GM10248 (cell line): ENCODE measurements at regions of chr1 and their contacts with region 1.

Region 1: DNA sequence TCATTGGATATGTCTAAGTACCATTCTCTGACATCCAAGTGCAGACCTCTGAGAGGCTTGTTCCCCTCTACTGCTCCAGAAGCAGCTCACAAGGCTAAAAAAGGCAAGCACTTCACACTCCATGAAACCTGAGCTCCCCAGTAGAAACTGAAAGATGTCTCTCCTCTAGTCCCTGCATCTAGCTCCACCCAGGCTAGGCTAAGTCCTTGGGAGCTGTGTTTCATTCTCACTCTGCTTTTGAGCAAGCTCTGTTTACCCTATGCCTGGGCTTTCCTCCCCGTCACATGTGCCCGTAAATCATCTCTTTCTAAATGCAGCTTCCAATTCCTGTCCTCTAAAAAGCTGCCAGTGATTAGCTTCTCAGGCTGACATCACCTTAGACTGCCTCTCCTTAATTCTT is 39.0 kb downstream of the LRRC71 start:
- DNase-seq: no peak
- CTCF ChIP-seq: no peak

Region 2: DNA sequence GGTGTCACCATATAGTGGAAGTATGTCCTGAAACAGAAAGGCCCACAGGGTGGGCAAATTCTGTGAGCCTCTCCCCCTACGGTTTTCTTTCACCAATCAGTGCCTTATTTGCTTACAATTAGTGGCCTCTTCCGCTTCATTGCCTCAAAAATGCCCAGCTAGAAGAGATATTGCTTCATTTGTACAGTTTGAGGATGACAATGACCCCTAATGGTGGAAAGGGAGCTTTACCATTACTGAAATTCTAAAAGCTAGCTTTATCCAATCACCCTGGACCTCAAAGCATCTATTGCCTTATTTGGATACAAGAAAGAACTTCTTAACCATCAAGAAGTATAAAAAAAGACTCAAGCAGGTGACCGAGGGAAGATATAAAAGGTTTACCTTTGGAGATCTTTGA is 10.6 kb after region 1 on chr1:
- CTCF ChIA-PET with region 1: interaction called, 15 read pairs
- POLR2A ChIA-PET with region 1: no interaction called
- DNase-seq: no peak
- CTCF ChIP-seq: peak; percentile 21